Sigmoid colon (tissue), 7 donors: ENCODE measurements at regions of chr11 and their contacts with region 1.

Region 1: DNA sequence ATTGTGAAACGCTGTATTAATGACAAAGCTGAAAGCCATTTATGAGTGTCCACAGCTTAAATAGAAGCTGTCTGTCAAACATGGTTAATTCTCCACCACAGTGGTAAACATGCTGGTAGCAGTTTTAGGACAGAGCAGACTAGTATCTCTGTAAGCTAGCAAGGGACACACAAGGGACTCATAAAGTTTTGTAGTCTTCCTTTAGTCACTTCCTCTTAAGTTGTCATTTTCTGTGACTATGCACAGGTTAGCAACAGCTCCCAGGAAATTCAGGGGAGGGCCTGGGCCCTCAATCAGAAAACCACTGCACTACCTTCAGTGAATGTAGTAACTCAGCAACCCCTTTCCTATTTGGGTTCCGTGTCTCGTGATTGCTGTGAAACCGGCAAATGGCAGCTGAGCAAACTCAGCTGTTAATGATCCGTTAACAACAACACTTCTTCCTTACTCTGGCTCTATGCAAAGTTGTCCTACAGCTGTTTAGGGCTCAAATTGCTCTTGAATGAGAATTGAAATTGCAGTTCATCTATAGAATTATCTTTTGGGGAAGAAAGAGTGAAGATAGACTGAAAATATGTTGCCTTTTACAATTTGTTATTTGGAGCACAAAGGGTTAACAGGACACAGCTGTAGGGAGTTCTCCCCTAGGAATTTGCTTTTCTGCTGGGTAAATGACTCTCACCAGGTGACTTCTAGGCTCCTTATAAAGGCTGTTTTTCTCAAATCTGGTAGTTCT is at the start of gene MMP26:
- DNase-seq: no peak
- H3K4me3 ChIP-seq: no peak within 1 kb of the TSS
- H3K27ac ChIP-seq: peak within 1 kb of the TSS in 3 of 4 donors; percentile 6 to 44 (median 11)
- H3K4me1 ChIP-seq: peaks cover 0 to 32% (median 12%) of the 10 kb centered on the region in 4 donors
- H3K27me3 ChIP-seq: no peaks in the 10 kb centered on the region
- CTCF ChIP-seq: no peak
- EP300 ChIP-seq: no peak
- POLR2A ChIP-seq: no peak
- total RNA-seq, gene MMP26: not detected

Region 2: GRCh38 chr11:4643076-4643475 is 61.1 kb before region 1 on chr11:
- intact Hi-C with region 1: loop called (anchors 5 kb)
- DNase-seq: no peak
- H3K4me3 ChIP-seq: no peak overlapping the region
- H3K27ac ChIP-seq: no peak overlapping the region
- H3K4me1 ChIP-seq: peaks cover 0 to 48% (median 44%) of the 10 kb centered on the region in 4 donors
- H3K27me3 ChIP-seq: no peaks in the 10 kb centered on the region
- CTCF ChIP-seq: no peak
- EP300 ChIP-seq: no peak
- POLR2A ChIP-seq: no peak